BJ (cell line): ENCODE measurements at regions of chr19 and their contacts with region 1.

Region 1: DNA sequence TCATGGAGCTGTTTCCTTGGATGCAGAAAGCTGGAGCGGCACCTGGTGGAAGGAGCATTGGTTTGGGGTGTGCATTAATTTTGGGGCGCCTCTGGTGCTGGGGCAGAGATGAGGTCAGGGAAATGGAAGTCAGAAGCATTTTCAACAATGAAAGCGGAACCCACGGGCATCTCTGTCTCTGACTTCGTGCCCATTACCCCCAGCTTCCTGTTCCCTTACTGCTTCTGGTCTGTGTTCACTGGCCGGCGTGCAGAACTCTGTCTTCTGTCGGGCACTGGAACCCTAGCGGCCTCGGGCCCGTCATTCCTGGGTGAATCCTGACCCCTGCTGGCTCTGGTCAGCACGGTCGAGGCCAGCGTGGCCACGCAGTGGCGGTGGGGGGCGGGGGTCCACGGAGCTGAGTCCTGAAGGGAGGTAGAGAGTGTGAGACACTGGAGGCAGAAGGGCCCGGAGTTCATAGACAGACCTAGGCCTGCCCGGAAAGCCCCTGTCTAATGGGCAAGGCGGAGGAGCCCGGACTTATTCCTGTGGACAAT is 7.9 kb upstream of the LINGO3 start:
- DNase-seq: no peak
- H3K4me3 ChIP-seq: no peak overlapping the region
- H3K27me3 ChIP-seq: peaks cover 4% of the 10 kb centered on the region
- CTCF ChIP-seq: peak; percentile 81

Region 2: DNA sequence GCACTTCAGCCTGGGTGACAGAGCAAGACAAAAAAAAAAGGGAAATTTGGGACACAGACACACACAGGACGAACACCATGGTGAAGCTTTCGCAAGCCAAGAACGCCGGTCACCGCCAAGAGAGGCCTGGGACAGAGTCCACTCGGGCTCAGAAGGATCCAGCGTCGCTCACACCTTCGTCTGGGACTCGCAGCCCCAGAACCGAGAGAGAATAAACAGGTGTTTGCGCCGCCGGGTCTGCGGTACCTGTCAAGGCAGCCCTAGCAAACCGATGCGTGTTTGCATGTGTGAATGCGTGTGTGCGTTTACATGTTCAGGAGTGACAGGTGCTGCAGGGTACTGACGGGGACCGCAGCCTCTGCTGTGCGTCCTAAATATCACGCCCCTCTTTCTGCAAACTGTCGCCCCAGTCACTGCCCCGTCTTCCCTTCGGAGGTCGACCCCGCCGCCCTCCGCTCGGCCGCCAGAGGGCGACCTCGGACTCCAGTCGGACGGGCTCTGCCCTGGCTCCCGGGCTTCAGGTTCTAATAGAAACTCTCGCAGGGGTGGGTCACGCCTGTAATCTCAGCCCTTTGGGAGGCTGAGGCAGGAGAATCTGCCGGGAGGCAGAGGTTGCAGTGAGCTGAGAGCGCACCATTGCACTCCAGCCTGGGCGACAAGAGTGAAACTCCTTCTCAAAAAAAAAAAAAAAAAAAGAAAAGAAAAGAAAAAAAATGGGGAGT is 386.7 kb before region 1 on chr19:
- CTCF ChIA-PET with region 1: interaction called, 14 read pairs
- POLR2A ChIA-PET with region 1: no interaction called
- DNase-seq: peak; percentile 4
- H3K4me3 ChIP-seq: peak overlapping the region; percentile 20
- H3K27me3 ChIP-seq: no peaks in the 10 kb centered on the region
- CTCF ChIP-seq: peak; percentile 97

Region 3: GRCh38 chr19:2154587-2155075 is 161.3 kb before region 1 on chr19:
- CTCF ChIA-PET with region 1: interaction called, 35 read pairs
- POLR2A ChIA-PET with region 1: no interaction called
- DNase-seq: peak; percentile 87
- H3K4me3 ChIP-seq: no peak overlapping the region
- H3K27me3 ChIP-seq: no peaks in the 10 kb centered on the region
- CTCF ChIP-seq: no peak

Region 4: DNA sequence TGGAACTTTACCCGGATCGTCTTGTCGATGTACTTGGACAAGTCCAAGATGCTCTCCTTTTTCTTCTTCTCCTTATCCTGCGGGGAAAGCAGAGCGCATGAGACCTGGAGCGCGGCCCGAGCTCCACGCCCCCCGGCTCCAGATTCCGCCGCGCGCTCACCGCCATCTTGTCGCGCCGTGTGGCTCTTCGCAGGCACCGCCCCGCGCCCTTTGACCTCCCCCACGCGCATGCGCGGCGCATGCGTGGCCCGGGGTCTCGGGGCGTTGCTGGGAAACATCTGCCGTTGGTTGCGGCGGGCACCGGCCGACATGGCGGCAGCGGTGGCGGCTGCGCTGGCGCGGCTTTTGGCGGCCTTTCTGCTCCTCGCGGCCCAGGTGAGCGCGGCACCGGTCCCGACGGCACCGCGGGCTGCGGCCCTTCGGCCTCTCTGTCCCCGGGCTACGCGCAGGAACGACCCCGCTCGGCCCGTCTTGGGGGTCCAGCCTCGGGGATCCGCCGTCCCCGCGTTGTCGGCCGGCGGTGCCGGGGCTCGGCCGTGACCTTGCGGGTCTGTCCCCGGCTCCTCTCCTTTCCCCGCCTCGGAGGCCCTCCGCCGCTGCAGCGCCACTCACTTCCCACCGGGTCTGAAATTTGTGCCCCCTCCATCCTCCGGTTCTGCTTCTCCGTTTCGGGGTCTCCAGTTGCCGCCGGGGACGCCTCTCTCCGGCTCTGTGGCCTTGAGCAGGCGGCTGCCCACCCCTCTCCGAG is 12.7 kb after region 1 on chr19 and contains the starts of genes LSM7 and SPPL2B:
- CTCF ChIA-PET with region 1: interaction called, 27 read pairs
- POLR2A ChIA-PET with region 1: interaction called, 3 read pairs
- DNase-seq: peak; percentile 38
- H3K4me3 ChIP-seq: peak within 1 kb of the TSS; percentile 95
- H3K27me3 ChIP-seq: no peaks in the 10 kb centered on the region
- CTCF ChIP-seq: no peak
- polyA plus RNA-seq, gene LSM7: 154 and 165 TPM in 2 replicates
- polyA plus RNA-seq, gene SPPL2B: 12.0 and 24.9 TPM in 2 replicates